Breast epithelium (tissue), 4 donors: ENCODE measurements at regions of chr7 and their contacts with region 1.

Region 1: DNA sequence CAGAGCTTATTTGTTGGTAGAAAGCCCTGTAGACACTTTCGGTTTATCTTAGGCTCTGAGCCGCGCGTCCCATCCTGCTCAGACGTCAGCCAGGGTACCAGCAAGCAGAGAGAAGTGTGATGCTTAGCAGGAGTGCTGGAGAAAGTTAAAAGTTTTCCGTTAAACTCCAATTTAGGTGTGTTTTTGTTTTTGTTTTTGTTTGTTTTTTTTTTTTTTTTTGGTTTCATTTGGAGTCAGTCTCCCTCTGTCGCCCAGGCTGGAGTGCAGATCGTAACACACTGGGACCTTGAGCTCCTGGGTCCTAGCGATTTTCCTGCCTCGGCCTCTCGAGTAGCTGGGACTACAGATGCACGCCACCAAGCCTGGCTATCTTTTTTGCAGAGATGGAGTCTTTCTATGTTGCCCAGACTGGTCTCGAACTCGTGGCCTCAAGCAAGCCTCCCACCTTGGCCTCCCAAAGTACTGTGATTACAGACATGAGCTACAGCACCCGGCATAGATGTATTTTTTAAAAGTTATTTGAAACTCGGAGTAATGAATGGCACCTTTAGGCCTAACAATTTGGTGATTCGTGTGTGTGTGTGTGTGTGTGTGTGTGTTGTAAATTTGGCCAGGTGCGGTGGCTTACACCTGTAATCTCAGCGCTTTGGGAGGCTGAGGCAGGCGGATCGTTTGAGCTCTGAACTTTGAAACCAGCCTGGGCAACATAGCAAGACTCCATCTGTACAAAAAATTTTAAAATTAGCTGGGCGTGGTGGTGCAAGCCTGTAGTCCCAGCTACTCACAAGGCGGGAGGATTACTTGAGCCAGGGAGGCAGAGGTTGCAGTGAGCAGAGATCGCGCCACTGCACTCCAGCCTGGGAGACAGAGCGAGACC is 1.3 kb upstream of the HIP1 start:
- DNase-seq: no peak
- H3K4me3 ChIP-seq: peak overlapping the region; percentile 85 to 97 (median 94)
- H3K27ac ChIP-seq: peak overlapping the region; percentile 73 to 75
- H3K4me1 ChIP-seq: no peaks in the 10 kb centered on the region
- H3K27me3 ChIP-seq: no peaks in the 10 kb centered on the region
- CTCF ChIP-seq: no peak
- POLR2A ChIP-seq: no peak

Region 2: DNA sequence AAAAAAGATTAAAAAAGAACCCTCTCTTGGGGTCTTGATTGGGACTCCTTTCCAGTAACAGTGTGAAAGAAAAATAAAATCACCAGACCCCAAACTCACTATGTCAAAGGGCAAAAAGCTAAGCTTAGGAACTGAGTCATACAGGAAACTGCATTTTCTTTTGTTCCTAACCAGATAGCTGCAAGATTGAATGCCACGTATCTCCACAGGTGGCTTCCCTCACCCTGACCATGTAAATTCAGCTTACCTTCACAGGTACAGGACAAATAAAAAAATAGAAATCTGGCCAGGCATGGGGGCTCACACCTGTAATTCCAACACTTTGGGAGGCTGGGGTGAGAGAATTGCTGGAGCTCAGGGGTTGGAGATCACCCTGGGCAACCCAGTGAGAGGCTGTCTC is 1598.3 kb before region 1 on chr7:
- intact Hi-C with region 1: loop called (anchors 5 kb)
- DNase-seq: no peak
- H3K4me3 ChIP-seq: no peak overlapping the region
- H3K27ac ChIP-seq: no peak overlapping the region
- H3K4me1 ChIP-seq: no peaks in the 10 kb centered on the region
- H3K27me3 ChIP-seq: no peaks in the 10 kb centered on the region
- CTCF ChIP-seq: no peak
- POLR2A ChIP-seq: no peak

Region 3: GRCh38 chr7:75650681-75651080 is 89.4 kb before region 1 on chr7:
- intact Hi-C with region 1: no loop called
- DNase-seq: no peak
- H3K4me3 ChIP-seq: no peak overlapping the region
- H3K27ac ChIP-seq: peak overlapping the region in 1 of 2 donors; percentile 69
- H3K4me1 ChIP-seq: no peaks in the 10 kb centered on the region
- H3K27me3 ChIP-seq: no peaks in the 10 kb centered on the region
- CTCF ChIP-seq: no peak
- POLR2A ChIP-seq: no peak